ENCODE measurements at regions of chr17 and their contacts with region 1.

Region 1: GRCh38 chr17:75109407-75110233 is at the start of gene ARMC7:
- DNase-seq: peak; percentile 99
- H3K4me3 Mint-ChIP-seq: peak within 1 kb of the TSS; percentile 94
- H3K27ac Mint-ChIP-seq: peak within 1 kb of the TSS; percentile 83
- H3K4me1 Mint-ChIP-seq: peaks cover 31% of the 10 kb centered on the region
- H3K27me3 Mint-ChIP-seq: no peaks in the 10 kb centered on the region
- total RNA-seq, gene ARMC7: 11.2 and 12.0 TPM in 2 replicates

Region 2: DNA sequence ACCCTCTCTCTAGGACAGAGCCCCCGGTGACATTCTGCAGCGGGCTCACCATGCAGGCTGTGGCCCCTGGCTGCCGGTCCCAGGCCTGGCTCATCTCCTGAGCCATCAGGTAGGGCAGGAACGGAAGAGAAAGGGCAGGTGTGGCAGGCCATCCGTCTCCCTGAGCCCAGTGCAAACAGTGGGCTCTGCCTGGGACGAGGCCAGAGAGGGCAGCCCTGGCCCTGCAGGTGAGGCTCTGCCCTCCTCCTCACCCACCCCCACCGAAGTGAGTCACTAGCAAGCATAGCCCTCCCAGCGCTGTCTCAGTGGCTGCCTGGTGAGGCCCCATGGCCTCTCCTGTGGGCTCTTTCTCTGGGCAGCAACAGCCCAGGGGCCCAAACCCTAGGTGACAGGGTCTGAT is 159.4 kb before region 1 on chr17:
- intact Hi-C with region 1: no loop called
- DNase-seq: no peak
- H3K4me3 Mint-ChIP-seq: no peak overlapping the region
- H3K27ac Mint-ChIP-seq: no peak overlapping the region
- H3K4me1 Mint-ChIP-seq: no peaks in the 10 kb centered on the region
- H3K27me3 Mint-ChIP-seq: peaks cover 8% of the 10 kb centered on the region

Region 3: DNA sequence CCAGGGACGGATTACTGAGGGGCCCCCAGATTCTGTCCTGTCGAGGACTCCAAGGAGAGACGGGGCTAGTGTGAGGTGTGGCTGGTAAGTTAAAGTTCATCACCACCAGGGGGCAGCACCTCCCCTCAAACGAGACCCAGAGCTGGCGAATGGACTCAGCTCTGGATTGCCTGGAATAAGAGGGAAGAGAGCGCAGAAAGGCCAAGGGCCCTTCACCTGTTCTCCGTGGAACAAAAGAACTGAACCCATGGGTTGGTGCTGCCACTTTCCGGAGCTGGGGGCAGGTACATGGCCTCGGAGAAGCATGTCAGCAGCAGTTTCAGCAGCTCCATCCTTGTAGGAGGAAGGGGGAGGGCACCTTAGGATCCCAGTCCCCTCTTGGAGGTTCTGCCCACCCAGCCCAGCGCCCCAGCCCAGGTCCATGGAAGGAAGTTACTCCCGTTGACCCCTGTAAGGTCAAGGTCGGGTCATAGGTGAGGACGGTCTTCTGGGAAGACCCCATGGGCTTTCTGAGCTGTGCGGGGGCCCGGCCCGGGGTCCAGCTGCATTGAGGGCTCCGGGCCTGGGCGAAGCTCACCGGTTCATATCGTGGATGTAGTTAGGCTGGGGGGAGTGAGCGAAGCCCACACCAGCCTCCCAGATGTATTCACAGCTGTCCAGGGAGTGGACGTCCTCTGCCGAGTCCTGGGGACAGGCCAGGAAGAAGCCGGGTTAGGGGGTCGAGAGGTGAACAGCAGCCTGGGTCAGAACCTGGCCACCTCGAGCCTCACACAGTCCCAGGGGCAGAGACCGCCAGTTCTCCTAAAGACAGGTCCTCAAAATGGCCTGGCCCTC is 147.7 kb before region 1 on chr17:
- intact Hi-C with region 1: loop called (anchors 10 kb)
- DNase-seq: peak; percentile 95
- H3K4me3 Mint-ChIP-seq: no peak overlapping the region
- H3K27ac Mint-ChIP-seq: no peak overlapping the region
- H3K4me1 Mint-ChIP-seq: peaks cover 8% of the 10 kb centered on the region
- H3K27me3 Mint-ChIP-seq: peaks cover 14% of the 10 kb centered on the region

Region 4: GRCh38 chr17:75077496-75078283 is 31.9 kb before region 1 on chr17:
- intact Hi-C with region 1: no loop called
- DNase-seq: peak; percentile 84
- H3K4me3 Mint-ChIP-seq: peak overlapping the region; percentile 74
- H3K27ac Mint-ChIP-seq: peak overlapping the region; percentile 65
- H3K4me1 Mint-ChIP-seq: peaks cover 16% of the 10 kb centered on the region
- H3K27me3 Mint-ChIP-seq: no peaks in the 10 kb centered on the region

Region 5: GRCh38 chr17:75087558-75088453 is 21.8 kb before region 1 on chr17 and contains the start of gene SLC16A5:
- intact Hi-C with region 1: loop called (anchors 2 kb)
- DNase-seq: peak; percentile 88
- H3K4me3 Mint-ChIP-seq: peak within 1 kb of the TSS; percentile 88
- H3K27ac Mint-ChIP-seq: peak within 1 kb of the TSS; percentile 87
- H3K4me1 Mint-ChIP-seq: peaks cover 45% of the 10 kb centered on the region
- H3K27me3 Mint-ChIP-seq: no peaks in the 10 kb centered on the region
- total RNA-seq, gene SLC16A5: 6.8 and 7.2 TPM in 2 replicates

Region 6: GRCh38 chr17:75154195-75155106 is 44.8 kb after region 1 on chr17 and contains the start of gene JPT1:
- intact Hi-C with region 1: loop called (anchors 5 kb)
- DNase-seq: peak; percentile 99
- H3K4me3 Mint-ChIP-seq: peak within 1 kb of the TSS; percentile 98
- H3K27ac Mint-ChIP-seq: peak within 1 kb of the TSS; percentile 96
- H3K4me1 Mint-ChIP-seq: peaks cover 30% of the 10 kb centered on the region
- H3K27me3 Mint-ChIP-seq: no peaks in the 10 kb centered on the region
- total RNA-seq, gene JPT1: 271 and 292 TPM in 2 replicates

Region 7: DNA sequence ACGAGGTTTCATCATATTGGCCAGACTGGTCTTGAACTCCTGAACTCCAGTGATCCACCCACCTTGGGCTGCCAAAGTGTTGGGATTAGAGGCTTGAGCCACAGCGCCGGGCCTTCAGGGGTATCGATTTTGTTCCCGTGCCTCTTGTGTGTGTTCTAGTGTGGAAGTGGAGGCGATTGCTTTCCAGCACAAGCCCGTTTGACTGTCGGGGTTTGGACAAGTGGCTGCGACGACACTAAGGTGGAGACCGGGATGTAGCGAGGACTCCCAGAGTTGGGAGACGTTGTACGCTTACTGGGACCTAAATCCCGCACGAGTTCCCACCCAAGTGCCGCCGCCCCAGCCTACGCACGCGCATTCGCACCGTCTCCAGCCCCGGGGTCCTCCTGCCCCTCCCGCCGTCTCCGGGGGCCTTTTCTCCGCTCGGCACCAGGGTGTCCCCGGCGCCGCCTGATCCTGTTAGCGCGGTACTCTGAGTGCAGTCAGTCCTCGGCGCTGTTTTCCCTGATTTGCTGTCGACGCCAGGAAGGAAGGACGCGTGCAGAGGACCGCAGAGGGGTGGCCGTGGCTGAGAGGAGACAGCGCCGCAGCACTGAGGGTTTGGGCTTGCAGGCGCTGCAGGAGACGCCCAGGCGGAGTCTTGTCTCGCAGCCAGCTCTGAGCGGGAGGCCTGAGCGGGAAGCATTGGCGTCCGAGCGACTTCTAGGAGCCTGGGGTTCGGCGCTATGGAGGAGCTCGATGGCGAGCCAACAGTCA is 95.6 kb after region 1 on chr17 and contains the start of gene NUP85:
- intact Hi-C with region 1: loop called (anchors 1 kb)
- DNase-seq: peak; percentile 98
- H3K4me3 Mint-ChIP-seq: peak within 1 kb of the TSS; percentile 97
- H3K27ac Mint-ChIP-seq: peak within 1 kb of the TSS; percentile 99
- H3K4me1 Mint-ChIP-seq: peaks cover 14% of the 10 kb centered on the region
- H3K27me3 Mint-ChIP-seq: no peaks in the 10 kb centered on the region
- total RNA-seq, gene NUP85: 125 and 136 TPM in 2 replicates